Spleen (tissue), 13 donors: ENCODE measurements at regions of chr3 and their contacts with region 1.

Region 1: DNA sequence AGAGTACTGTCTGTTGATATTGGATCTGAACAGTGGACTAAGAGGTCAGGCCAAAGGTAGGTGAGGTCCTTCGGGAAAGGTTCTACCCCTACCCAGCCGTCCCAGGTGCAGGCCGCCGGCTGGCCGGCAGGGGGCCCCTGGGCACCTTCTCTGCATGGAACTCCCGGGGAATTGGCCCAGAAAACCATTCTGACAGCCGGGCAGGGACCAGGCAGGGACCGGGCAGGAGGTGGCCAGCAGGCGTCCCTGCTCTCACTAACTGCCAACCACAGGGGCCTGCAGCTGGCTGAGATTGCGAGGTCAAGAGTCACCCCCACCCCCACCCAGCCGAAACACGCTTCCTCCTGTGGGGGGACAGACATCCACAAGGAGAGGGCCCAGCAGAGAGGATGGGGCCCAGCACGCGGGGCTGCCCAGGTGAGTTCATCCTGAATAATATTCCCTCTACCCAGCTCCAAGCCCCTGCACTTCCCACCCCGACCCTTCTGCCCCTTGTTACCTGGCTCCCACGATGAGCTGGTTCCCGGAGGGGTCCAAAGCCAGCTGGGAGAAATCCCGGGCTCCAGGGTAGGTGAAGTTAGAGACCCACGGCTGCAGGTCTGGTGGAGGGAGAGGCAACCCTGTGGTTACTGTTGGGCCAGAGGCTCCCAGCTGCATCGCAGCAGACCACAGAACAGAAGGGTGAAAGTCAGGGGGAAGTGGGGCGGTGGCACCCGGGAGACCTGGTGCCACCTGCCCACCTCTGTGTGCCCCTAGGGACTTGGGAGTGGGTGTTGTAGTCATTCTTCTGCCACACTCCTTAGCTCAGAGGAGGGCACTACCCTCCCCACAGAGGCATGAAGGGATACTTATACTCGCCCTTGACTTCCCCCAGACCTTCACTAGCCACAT is 84.4 kb downstream of the SEMA5B start:
- DNase-seq: peak; percentile 81
- H3K4me3 ChIP-seq: no peak overlapping the region
- H3K27ac ChIP-seq: no peak overlapping the region
- H3K4me1 ChIP-seq: peaks cover 0 to 45% (median 13%) of the 10 kb centered on the region in 6 donors
- H3K27me3 ChIP-seq: peaks cover 0 to 10% (median 0%) of the 10 kb centered on the region in 7 donors
- CTCF ChIP-seq: peak; percentile 35 to 88 (median 75)
- POLR2A ChIP-seq: no peak

Region 2: GRCh38 chr3:123028233-123028828 is 85.1 kb after region 1 on chr3:
- intact Hi-C with region 1: loop called (anchors 10 kb)
- DNase-seq: no peak
- H3K4me3 ChIP-seq: peak overlapping the region; percentile 49 to 75 (median 60)
- H3K27ac ChIP-seq: no peak overlapping the region
- H3K4me1 ChIP-seq: peaks cover 18 to 62% (median 38%) of the 10 kb centered on the region in 6 donors
- H3K27me3 ChIP-seq: peaks cover 17 to 79% (median 53%) of the 10 kb centered on the region in 7 donors
- CTCF ChIP-seq: peak in 9 of 11 experiments; percentile 5 to 50 (median 36)
- POLR2A ChIP-seq: no peak

Region 3: GRCh38 chr3:123267821-123268220 is 324.6 kb after region 1 on chr3:
- intact Hi-C with region 1: loop called (anchors 10 kb)
- DNase-seq: no peak
- H3K4me3 ChIP-seq: no peak overlapping the region
- H3K27ac ChIP-seq: no peak overlapping the region
- H3K4me1 ChIP-seq: no peaks in the 10 kb centered on the region
- H3K27me3 ChIP-seq: no peaks in the 10 kb centered on the region
- CTCF ChIP-seq: no peak
- POLR2A ChIP-seq: no peak